ENCODE measurements at regions of chr5 and their contacts with region 1.

Region 1: DNA sequence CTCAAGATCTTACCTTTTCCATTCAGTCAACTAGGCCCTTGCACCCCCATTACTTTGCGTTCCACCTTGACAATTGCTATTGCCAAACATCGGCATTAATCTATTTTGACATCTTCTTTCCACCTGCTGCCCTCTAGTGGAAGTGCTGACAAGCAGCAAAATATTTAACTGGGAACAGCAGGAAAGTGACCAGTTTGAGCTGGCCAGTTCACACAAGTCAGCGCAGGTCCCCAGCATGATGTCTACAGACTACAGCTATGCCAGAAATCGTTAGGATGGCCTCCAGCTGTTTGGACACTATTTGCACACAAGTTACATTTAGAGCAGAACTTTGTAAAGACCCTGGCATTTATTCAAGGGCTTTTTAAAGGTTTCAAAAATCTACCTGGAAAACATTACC is 160.1 kb downstream of the GHR start:
- DNase-seq: peak; percentile 50 to 58
- ATAC-seq: peak; percentile 73 to 85; a peak in 5 of 6 replicates
- H3K4me3 ChIP-seq: no peak overlapping the region
- H3K27ac ChIP-seq: no peak overlapping the region
- H3K4me1 ChIP-seq: no peaks in the 10 kb centered on the region
- CTCF ChIP-seq: peak; percentile 72
- EP300 ChIP-seq: no peak
- POLR2A ChIP-seq: no peak
- RAD21 ChIP-seq: peak; percentile 60 to 64; a peak in 4 of 5 replicates

Region 2: DNA sequence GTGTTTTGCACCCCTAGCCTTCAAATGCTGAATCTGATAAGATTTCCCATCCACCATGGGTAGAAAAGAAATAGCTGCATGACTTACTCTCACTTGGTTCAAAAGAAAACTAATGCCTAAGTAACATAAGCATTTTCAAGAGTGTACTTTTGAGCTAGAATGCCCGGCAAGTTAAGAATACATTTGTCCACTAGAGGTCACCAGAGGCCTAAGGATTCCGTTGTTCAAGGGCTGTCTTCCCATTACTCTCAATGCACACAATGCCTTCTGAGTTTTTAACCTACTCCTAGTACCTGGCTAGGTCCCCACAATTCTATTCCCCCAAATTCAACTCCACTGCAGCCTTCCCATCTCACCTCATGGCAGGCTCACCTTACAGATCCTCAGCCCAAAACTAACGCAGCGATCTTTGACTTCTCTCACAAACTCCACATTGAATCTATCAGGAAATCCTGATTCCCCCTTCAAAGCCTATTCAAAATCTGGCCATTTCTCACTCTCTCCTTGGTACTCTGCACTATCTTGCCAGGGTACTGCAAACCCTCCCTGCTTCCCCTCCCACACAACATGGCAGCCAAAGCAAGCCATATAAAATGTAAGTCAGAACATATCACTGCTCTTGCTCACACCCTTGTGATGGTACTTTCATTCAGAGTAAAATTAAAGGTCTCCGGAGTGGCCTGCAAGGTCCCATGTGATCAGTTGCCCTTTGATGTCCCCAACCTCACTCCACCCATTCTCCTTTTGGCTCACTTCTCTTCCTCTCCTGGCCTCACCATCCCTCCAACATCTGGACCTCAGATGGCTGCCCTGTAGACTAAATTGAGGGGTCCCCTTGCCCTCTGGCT is 726.5 kb before region 1 on chr5:
- CTCF ChIA-PET with region 1: interaction called, 15 read pairs
- POLR2A ChIA-PET with region 1: no interaction called
- DNase-seq: peak; percentile 42 to 69
- ATAC-seq: peak; percentile 86 to 97
- H3K4me3 ChIP-seq: no peak overlapping the region
- H3K27ac ChIP-seq: no peak overlapping the region
- H3K4me1 ChIP-seq: no peaks in the 10 kb centered on the region
- CTCF ChIP-seq: peak; percentile 86
- EP300 ChIP-seq: no peak
- POLR2A ChIP-seq: no peak
- RAD21 ChIP-seq: peak; percentile 86 to 92

Region 3: DNA sequence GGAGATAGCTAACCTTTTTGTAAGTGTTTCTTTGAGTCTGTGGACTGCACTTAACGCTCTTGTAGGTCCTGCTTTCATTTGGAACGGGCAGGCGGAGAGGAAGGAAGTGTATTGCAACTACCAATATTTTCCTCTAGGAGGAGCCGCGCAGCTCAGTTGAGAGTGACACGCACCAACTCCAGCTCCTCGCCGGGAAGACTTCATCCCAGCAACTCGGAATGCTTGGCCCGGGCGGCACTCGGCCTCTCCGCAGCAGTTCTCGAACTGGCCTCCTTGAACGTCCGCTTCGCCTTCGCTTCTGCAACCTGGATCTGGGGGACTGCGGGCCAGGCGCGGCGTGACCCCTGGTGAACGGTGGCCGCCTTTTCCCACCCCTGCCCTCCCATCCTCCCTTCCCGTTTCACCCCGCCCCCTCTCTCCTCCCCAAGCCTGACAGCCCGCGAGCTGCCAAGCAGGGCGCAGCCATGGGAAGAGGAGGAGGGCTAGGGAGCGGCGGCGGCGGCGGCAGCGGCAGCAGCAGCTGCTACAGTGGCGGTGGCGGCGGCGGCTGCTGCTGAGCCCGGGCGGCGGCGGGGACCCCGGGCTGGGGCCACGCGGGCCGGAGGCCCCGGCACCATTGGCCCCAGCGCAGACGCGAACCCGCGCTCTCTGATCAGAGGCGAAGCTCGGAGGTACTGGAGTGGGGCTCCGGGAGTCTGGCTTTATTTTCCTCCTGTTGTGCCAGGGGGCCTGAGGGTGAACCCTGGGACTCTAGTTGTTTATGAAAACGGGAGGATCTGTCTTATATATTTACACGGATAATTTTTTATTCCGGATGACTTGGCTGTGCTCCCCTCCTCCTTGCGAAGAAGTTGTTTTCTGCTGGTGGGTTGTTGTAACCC is 159.8 kb before region 1 on chr5 and contains the start of gene GHR:
- CTCF ChIA-PET with region 1: interaction called, 20 read pairs
- POLR2A ChIA-PET with region 1: no interaction called
- DNase-seq: peak; percentile 69 to 85
- ATAC-seq: peak; percentile 97 to 99
- H3K4me3 ChIP-seq: peak within 1 kb of the TSS; percentile 58
- H3K27ac ChIP-seq: peak within 1 kb of the TSS in 1 of 2 experiments; percentile 62; a peak in 4 of 6 replicates
- H3K4me1 ChIP-seq: peaks cover 8% of the 10 kb centered on the region; the same call in 2 of the 3 replicates
- CTCF ChIP-seq: peak; percentile 56
- EP300 ChIP-seq: no peak
- POLR2A ChIP-seq: no peak
- RAD21 ChIP-seq: peak; percentile 53 to 65
- polyA plus RNA-seq, gene GHR: 0.05 TPM in 2 replicates

Region 4: DNA sequence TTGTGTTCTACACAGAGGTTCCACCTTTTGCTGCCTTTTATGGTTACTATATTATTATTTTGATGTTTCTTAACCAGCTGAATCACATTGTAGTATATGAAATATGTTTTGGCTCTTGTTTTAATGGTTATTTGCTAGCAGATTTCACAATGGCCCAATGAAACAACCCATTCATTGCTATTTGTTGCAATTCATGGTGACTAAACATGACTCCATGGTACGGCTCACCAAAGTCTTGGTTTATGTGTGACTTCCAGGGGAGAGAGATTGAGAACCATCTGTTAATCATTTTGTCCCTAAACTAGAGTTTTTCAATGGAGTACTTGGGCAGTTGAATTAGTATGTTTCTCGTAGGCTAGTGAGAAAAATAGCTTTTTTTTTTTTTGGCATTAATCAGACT is 51.7 kb before region 1 on chr5:
- CTCF ChIA-PET with region 1: no interaction called
- POLR2A ChIA-PET with region 1: no interaction called
- DNase-seq: no peak
- ATAC-seq: no peak
- H3K4me3 ChIP-seq: no peak overlapping the region
- H3K27ac ChIP-seq: no peak overlapping the region
- H3K4me1 ChIP-seq: no peaks in the 10 kb centered on the region
- CTCF ChIP-seq: no peak
- EP300 ChIP-seq: no peak
- POLR2A ChIP-seq: no peak
- RAD21 ChIP-seq: no peak

Region 5: DNA sequence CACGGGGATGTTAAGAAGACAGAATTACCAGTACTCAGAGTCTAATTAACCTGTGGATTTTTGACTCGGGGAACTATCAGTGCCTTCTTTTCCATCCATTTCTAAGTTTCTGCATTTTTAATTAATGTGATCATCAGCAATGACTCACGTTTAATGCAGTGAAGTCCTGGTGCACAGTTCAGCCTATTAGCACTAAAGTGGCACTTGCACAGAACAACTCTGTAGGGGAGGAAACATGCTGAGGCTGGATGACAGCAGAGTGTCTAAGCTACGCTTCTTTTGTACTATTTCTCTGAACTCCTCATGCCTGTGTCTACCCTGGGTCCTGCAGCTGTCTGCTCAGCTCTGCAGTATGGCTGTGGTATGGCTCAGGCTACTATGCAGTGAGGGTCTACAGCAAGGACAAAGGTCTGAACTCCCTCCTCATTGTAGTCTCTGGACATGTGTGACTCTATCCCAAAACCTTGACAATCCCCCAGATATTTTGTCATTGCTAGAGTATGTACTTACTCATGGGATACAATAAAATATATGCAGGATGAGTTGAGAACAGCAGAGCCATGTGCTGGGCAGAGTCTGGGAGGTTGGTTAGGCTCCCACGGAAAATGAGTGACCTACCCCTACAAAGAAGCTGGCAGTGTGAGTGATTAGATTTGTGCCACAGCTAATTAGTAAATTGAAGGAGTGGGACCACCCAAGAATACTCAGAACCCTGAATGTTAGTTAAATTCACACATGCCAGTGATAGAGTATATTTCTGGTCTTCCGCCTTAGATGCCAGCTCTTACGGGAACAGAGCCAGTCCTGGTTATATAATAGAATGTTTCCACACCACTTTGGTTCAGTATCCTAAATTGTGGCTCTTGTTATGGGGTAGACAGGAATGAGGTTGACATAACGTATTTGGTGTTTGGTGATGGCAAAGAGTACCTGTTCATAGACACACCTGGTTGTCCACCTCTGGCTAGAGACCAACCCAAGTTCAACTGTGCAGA is 12.1 kb before region 1 on chr5:
- CTCF ChIA-PET with region 1: interaction called, 12 read pairs
- POLR2A ChIA-PET with region 1: no interaction called
- DNase-seq: no peak
- ATAC-seq: no peak
- H3K4me3 ChIP-seq: no peak overlapping the region
- H3K27ac ChIP-seq: no peak overlapping the region
- H3K4me1 ChIP-seq: no peaks in the 10 kb centered on the region
- CTCF ChIP-seq: no peak
- EP300 ChIP-seq: no peak
- POLR2A ChIP-seq: no peak
- RAD21 ChIP-seq: no peak

Region 6: GRCh38 chr5:42908509-42909488 is 325.5 kb after region 1 on chr5:
- CTCF ChIA-PET with region 1: no interaction called
- POLR2A ChIA-PET with region 1: no interaction called
- DNase-seq: peak; percentile 83 to 89
- ATAC-seq: peak; percentile 87 to 94
- H3K4me3 ChIP-seq: peak overlapping the region; percentile 42
- H3K27ac ChIP-seq: peak overlapping the region; percentile 32 to 64; a peak in 4 of 6 replicates
- H3K4me1 ChIP-seq: peaks cover 4% of the 10 kb centered on the region; the same call in 1 of the 3 replicates
- CTCF ChIP-seq: peak; percentile 88
- EP300 ChIP-seq: no peak
- POLR2A ChIP-seq: no peak
- RAD21 ChIP-seq: peak; percentile 73 to 80

Measured in A549 (cell line).